ENCODE measurements at regions of chr19 and their contacts with region 1.

Region 1: GRCh38 chr19:9818734-9819589 is at the start of gene FBXL12:
- DNase-seq: peak; percentile 100
- H3K4me3 Mint-ChIP-seq: peak within 1 kb of the TSS; percentile 88
- H3K27ac Mint-ChIP-seq: peak within 1 kb of the TSS; percentile 93
- H3K4me1 Mint-ChIP-seq: peaks cover 34% of the 10 kb centered on the region
- H3K27me3 Mint-ChIP-seq: no peaks in the 10 kb centered on the region
- total RNA-seq, gene FBXL12: 18.3 to 20.6 TPM

Region 2: GRCh38 chr19:9768175-9769112 is 50.5 kb before region 1 on chr19 and contains the start of gene ZNF846:
- CTCF ChIA-PET with region 1: no interaction called
- POLR2A ChIA-PET with region 1: interaction called, 22 read pairs
- DNase-seq: peak; percentile 94
- H3K4me3 Mint-ChIP-seq: peak within 1 kb of the TSS; percentile 85
- H3K27ac Mint-ChIP-seq: peak within 1 kb of the TSS; percentile 88
- H3K4me1 Mint-ChIP-seq: peaks cover 13% of the 10 kb centered on the region
- H3K27me3 Mint-ChIP-seq: no peaks in the 10 kb centered on the region
- total RNA-seq, gene ZNF846: 6.5 to 6.7 TPM

Region 3: GRCh38 chr19:9796113-9796773 is 22.7 kb before region 1 on chr19:
- CTCF ChIA-PET with region 1: no interaction called
- POLR2A ChIA-PET with region 1: interaction called, 11 read pairs
- DNase-seq: peak; percentile 90
- H3K4me3 Mint-ChIP-seq: no peak overlapping the region
- H3K27ac Mint-ChIP-seq: peak overlapping the region; percentile 74
- H3K4me1 Mint-ChIP-seq: peaks cover 32% of the 10 kb centered on the region
- H3K27me3 Mint-ChIP-seq: no peaks in the 10 kb centered on the region

Region 4: GRCh38 chr19:9842834-9843625 is 24.1 kb after region 1 on chr19:
- CTCF ChIA-PET with region 1: no interaction called
- POLR2A ChIA-PET with region 1: no interaction called
- DNase-seq: no peak
- H3K4me3 Mint-ChIP-seq: no peak overlapping the region
- H3K27ac Mint-ChIP-seq: no peak overlapping the region
- H3K4me1 Mint-ChIP-seq: peaks cover 15% of the 10 kb centered on the region
- H3K27me3 Mint-ChIP-seq: no peaks in the 10 kb centered on the region

Measured in activated CD4-positive, alpha-beta memory T cell treated with anti-CD3 and anti-CD28 coated beads, Interleukin-2, amount 10 ng/mL, durations not matched to agents 7 days and 5 days (primary cell).